Ovary (tissue), 10 donors: ENCODE measurements at regions of chr10 and their contacts with region 1.

Region 1: GRCh38 chr10:87094373-87095235 is at the starts of genes GLUD1 and SHLD2:
- DNase-seq: peak; percentile 79 to 88 (median 87)
- H3K4me3 ChIP-seq: peak within 1 kb of the TSS; percentile 83
- H3K27ac ChIP-seq: peak within 1 kb of the TSS; percentile 94 to 96
- H3K4me1 ChIP-seq: peaks cover 6% of the 10 kb centered on the region
- H3K27me3 ChIP-seq: no peaks in the 10 kb centered on the region
- CTCF ChIP-seq: no peak
- EP300 ChIP-seq: no peak
- POLR2A ChIP-seq: peak; percentile 75
- total RNA-seq, gene GLUD1: 116 to 142 (median 130) TPM
- total RNA-seq, gene SHLD2: 16.7 to 32.3 (median 26.8) TPM

Region 2: DNA sequence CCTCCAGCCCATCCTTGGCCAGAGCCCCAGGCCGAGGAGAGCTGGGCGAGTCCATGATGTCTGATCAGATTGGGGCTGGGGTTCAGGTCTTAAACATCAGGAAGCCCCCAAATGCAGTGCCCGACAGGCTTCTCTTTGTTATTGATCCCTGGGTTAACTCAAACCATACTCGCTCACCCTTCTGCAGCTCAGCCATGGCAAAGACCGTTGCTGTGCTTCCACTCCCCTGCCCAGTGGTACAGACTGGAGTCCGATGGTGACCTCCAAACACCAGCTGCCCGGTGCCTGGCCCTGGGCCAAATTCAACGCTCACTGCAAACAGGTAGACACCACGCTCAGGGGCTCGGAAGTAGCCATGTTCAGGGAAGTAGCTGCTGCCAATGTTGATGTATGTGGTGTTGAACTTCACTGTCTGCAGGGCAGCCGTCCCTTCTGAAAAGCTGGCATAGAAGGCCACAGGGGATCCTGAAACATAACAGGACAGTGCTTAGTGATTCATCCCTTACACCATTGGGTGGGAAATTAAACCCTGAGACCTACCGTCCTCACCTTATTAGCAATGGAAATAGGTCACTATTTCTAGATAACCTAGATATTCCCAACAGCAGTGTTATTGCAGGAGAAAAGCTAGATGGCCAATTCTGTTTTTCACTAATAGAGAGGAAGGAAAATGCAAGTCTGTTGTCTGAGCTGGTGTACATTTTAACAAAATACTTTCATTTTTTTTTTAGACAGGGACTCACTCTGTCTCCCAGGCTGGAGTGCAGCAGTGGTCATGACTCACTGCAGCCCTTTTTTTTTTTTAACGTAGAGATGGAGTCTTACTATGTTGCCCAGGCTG is 157.7 kb before region 1 on chr10:
- intact Hi-C with region 1: loop called in 1 of 4 experiments (anchors 10 kb)
- DNase-seq: peak in 2 of 5 donors; percentile 36 to 45
- H3K4me3 ChIP-seq: no peak overlapping the region
- H3K27ac ChIP-seq: no peak overlapping the region
- H3K4me1 ChIP-seq: peaks cover 2% of the 10 kb centered on the region
- H3K27me3 ChIP-seq: no peaks in the 10 kb centered on the region
- CTCF ChIP-seq: no peak
- EP300 ChIP-seq: no peak
- POLR2A ChIP-seq: no peak

Region 3: GRCh38 chr10:86960003-86960862 is 134.4 kb before region 1 on chr10:
- intact Hi-C with region 1: loop called in 1 of 4 experiments (anchors 10 kb)
- DNase-seq: peak in 4 of 5 donors; percentile 56 to 73 (median 62)
- H3K4me3 ChIP-seq: no peak overlapping the region
- H3K27ac ChIP-seq: peak overlapping the region; percentile 31 to 89
- H3K4me1 ChIP-seq: peaks cover 28% of the 10 kb centered on the region
- H3K27me3 ChIP-seq: no peaks in the 10 kb centered on the region
- CTCF ChIP-seq: peak; percentile 61 to 88 (median 77)
- EP300 ChIP-seq: no peak
- POLR2A ChIP-seq: no peak

Region 4: DNA sequence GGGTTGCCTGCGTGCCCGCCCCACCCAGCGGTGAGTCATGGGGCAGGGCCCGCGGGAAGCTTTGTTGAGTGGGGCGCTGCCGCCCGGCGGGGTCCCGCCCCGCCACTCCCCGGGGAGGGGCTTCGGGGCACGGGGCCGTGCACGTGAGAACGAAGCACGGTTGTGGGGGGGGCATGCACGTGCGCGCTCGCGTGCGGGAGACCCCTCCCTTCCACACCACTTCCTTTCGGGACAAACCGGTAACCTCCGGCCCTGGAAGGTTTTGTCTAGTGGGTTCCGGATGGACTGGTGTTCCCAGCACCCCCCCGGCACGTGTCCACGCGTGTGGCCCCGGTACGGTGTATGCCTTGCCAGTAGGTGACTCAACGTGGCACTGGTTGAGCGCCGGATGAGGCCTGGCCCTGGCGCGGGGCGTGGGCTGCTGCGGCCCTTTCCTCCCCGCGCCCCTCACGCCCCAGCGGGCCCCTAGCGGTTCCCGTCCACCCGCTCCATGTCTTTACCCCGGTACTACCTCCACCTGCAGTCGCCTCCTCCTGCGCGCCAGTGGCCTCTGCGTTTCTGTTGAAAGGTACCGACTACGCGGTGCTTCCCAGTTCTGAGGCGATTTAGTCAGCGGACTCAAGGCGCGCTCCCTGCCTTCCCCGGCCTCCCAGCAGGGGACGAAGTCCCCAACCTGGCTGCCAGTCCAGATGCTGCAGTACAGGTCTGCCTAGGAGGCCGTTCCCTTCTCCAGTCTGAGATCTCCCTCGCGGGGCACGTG is 123.2 kb before region 1 on chr10:
- intact Hi-C with region 1: loop called in 2 of 4 experiments (anchors 5 to 10 kb)
- DNase-seq: peak; percentile 93 to 98 (median 98)
- H3K4me3 ChIP-seq: peak overlapping the region; percentile 71
- H3K27ac ChIP-seq: peak overlapping the region; percentile 97 to 99
- H3K4me1 ChIP-seq: peaks cover 17% of the 10 kb centered on the region
- H3K27me3 ChIP-seq: no peaks in the 10 kb centered on the region
- CTCF ChIP-seq: peak in 2 of 3 donors; percentile 2 to 31
- EP300 ChIP-seq: peak; percentile 92
- POLR2A ChIP-seq: no peak